GM12878 (cell line): ENCODE measurements at regions of chr7 and their contacts with region 1.

Region 1: DNA sequence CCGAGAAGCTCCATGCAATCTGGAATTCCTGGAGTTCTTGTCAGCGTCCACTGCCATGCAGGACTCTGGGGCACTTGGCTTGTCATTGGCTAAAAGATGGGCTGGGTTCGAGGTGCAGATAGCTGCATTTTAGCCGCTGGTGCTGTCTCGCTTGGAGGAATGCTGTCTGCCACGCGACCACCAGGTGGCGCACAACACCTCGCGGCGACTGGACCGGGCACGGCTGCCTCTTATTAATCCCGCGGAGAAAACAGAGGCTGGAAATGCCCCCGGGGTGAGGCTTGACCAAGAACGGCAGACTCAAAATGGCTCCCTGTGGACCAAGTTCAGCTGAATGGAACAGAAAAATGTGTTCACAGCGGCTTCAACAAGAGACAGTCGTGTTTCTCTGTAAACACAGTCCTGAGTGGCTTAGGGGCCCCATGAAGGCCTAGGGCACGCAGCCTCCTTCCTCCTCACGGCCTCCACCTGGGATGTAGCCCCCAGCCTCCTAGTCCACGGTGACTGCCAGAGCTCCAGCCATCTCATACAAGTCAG is 46.2 kb downstream of the AOC1 start:
- DNase-seq: no peak
- ATAC-seq: peak; percentile 97
- H3K4me3 ChIP-seq: no peak overlapping the region
- H3K27ac ChIP-seq: no peak overlapping the region
- H3K4me1 ChIP-seq: peaks cover 16% of the 10 kb centered on the region
- H3K27me3 ChIP-seq: peaks cover 0 to 6% of the 10 kb centered on the region in 2 experiments; a peak in 2 of 4 replicates
- CTCF ChIP-seq: peak; percentile 89 to 97 (median 93); a peak in 5 of 6 replicates
- EP300 ChIP-seq: no peak
- POLR2A ChIP-seq: no peak
- RAD21 ChIP-seq: peak; percentile 70

Region 2: GRCh38 chr7:150778738-150779301 is 119.7 kb before region 1 on chr7:
- CTCF ChIA-PET with region 1: interaction called, 16 read pairs
- POLR2A ChIA-PET with region 1: no interaction called
- RAD21 ChIA-PET with region 1: interaction called, 3 read pairs
- SMC1A ChIA-PET with region 1: interaction called, 12 read pairs
- in situ Hi-C with region 1: no loop called
- intact Hi-C with region 1: no loop called
- DNase-seq: no peak
- ATAC-seq: peak; percentile 86
- H3K4me3 ChIP-seq: no peak overlapping the region
- H3K27ac ChIP-seq: no peak overlapping the region
- H3K4me1 ChIP-seq: 0 out of 2 replicates have a peak, but pooled peaks cover 3% of the 10 kb centered on the region
- H3K27me3 ChIP-seq: no peaks in the 10 kb centered on the region
- CTCF ChIP-seq: peak; percentile 87 to 92 (median 88)
- EP300 ChIP-seq: no peak
- POLR2A ChIP-seq: no peak
- RAD21 ChIP-seq: peak; percentile 77

Region 3: DNA sequence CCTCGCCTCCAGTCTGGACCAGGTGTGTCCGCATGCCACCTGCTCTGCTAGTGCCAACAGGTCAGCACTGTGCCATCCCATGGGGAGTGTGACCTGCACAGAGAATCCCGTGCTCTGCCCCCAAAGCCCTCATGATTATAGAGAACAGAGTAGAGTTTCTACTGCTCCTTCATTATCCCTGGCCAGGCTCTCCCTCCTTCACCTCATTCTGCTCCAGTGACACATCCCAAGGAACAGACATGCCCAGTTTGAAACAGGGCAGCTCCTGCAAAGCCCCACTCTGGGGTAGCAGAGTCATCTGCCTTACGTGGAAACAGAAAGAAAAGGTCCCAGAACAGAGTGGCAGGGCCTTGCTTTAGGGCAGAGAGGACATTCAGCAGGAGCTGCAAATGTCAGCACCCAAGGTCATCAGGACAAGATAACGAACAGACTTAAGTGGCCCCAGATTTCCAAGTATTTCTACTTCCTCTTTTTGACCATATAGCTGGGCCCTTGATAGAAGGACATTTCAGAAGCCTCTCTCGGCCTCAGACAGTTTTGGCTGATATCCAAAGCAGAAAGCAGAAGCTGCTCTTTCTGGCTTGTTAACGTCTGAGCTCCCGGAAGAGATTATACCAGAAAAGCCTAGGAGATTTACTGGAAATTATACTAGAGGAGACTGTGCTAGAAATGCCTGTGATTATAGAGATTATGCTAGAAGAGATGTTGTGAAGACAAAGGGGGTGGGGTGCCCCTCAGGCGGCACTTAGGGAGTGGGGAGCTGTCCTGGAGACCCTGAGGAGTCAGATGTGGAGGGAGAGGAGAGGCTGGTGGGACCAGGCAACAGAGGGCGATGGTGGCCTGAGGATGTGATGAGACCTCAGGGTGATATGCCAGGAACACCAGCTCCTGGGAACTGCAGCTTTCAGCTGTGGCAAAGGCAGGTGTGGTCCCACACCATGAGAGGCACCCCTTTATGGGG is 110.9 kb before region 1 on chr7:
- CTCF ChIA-PET with region 1: interaction called, 16 read pairs
- POLR2A ChIA-PET with region 1: no interaction called
- RAD21 ChIA-PET with region 1: interaction called, 3 read pairs
- SMC1A ChIA-PET with region 1: interaction called, 3 read pairs
- in situ Hi-C with region 1: no loop called
- intact Hi-C with region 1: no loop called
- DNase-seq: peak; percentile 30
- ATAC-seq: peak; percentile 59
- H3K4me3 ChIP-seq: no peak overlapping the region
- H3K27ac ChIP-seq: no peak overlapping the region
- H3K4me1 ChIP-seq: peaks cover 17% of the 10 kb centered on the region
- H3K27me3 ChIP-seq: peaks cover 0 to 2% of the 10 kb centered on the region in 2 experiments; a peak in 1 of 4 replicates
- CTCF ChIP-seq: no peak
- EP300 ChIP-seq: no peak
- POLR2A ChIP-seq: no peak
- RAD21 ChIP-seq: no peak

Region 4: GRCh38 chr7:150876817-150877526 is 21.6 kb before region 1 on chr7:
- CTCF ChIA-PET with region 1: interaction called, 18 read pairs
- POLR2A ChIA-PET with region 1: no interaction called
- RAD21 ChIA-PET with region 1: no interaction called
- SMC1A ChIA-PET with region 1: interaction called, 5 read pairs
- in situ Hi-C with region 1: no loop called
- intact Hi-C with region 1: no loop called
- DNase-seq: no peak
- ATAC-seq: peak; percentile 73
- H3K4me3 ChIP-seq: no peak overlapping the region
- H3K27ac ChIP-seq: no peak overlapping the region
- H3K4me1 ChIP-seq: no peaks in the 10 kb centered on the region
- H3K27me3 ChIP-seq: no peaks in the 10 kb centered on the region
- CTCF ChIP-seq: peak; percentile 28 to 62 (median 48); a peak in 4 of 6 replicates
- EP300 ChIP-seq: no peak
- POLR2A ChIP-seq: no peak
- RAD21 ChIP-seq: no peak

Region 5: DNA sequence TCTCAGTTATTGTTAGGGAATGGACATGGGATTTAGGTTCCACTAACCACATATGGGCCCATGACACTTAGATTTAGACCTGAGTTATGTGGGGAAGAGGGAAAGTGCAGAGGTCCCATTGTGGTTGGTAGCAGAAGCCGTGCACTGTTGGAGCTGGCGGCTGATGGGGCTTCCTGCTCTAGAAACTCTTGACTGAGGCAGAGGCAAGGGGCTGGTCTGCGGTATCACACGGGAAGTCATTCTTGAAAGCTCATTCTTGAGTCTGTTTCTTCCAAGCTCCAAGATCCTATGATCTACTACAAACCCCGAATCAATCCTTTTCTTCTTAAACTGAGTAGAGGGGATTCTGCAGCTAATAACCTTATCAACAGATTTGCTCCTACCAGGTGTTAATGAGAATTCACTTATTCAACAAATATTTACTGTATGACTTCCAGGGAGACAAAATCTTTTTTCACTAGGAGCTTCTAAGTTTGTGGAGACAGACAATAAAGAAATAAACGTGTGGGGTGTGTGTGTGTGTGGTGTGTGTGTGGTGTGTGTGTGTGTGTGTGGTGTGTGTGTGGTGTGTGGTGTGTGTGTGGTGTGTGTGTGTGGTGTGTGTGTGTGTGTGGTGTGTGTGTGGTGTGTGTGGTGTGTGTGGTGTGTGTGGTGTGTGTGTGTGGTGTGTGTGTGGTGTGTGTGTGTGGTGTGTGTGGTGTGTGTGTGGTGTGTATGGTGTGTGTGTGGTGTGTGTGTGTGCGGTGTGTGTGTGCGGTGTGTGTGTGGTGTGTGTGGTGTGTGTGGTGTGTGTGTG is 10.9 kb after region 1 on chr7:
- CTCF ChIA-PET with region 1: interaction called, 18 read pairs
- POLR2A ChIA-PET with region 1: no interaction called
- RAD21 ChIA-PET with region 1: no interaction called
- SMC1A ChIA-PET with region 1: interaction called, 3 read pairs
- in situ Hi-C with region 1: no loop called
- intact Hi-C with region 1: no loop called
- DNase-seq: no peak
- ATAC-seq: no peak
- H3K4me3 ChIP-seq: no peak overlapping the region
- H3K27ac ChIP-seq: no peak overlapping the region
- H3K4me1 ChIP-seq: no peaks in the 10 kb centered on the region
- H3K27me3 ChIP-seq: peaks cover 0 to 2% of the 10 kb centered on the region in 2 experiments; a peak in 1 of 4 replicates
- CTCF ChIP-seq: no peak
- EP300 ChIP-seq: no peak
- POLR2A ChIP-seq: no peak
- RAD21 ChIP-seq: no peak

Region 6: DNA sequence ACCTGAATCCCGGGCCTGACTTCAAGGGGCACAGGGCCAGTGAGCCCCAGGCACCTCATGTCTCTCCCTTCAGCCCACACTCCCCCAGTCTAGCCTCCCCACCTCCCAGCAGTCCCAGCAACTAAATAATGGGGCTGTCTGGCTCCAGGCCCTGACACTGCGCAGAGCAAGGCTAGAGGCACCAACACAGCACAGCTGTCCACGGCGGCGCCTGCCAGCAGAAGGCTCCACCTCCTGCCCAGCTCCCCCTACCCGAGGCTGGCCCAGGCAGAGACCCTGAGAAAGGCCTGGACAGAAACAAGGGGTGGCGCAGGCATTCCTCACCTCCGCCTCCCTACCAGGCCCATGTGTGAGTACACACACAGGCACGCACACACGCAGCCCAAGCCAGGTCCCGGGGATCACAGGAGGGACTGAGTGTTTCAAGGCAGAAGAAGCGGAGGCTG is 73.5 kb after region 1 on chr7:
- CTCF ChIA-PET with region 1: no interaction called
- POLR2A ChIA-PET with region 1: no interaction called
- RAD21 ChIA-PET with region 1: no interaction called
- SMC1A ChIA-PET with region 1: no interaction called
- in situ Hi-C with region 1: no loop called
- intact Hi-C with region 1: no loop called
- DNase-seq: no peak
- ATAC-seq: no peak
- H3K4me3 ChIP-seq: no peak overlapping the region
- H3K27ac ChIP-seq: no peak overlapping the region
- H3K4me1 ChIP-seq: peaks cover 3% of the 10 kb centered on the region
- H3K27me3 ChIP-seq: peaks cover 3 to 4% of the 10 kb centered on the region in 2 experiments
- CTCF ChIP-seq: no peak
- EP300 ChIP-seq: no peak
- POLR2A ChIP-seq: no peak
- RAD21 ChIP-seq: no peak

Region 7: GRCh38 chr7:150988230-150989226 is 90.0 kb after region 1 on chr7:
- CTCF ChIA-PET with region 1: interaction called, 10 read pairs
- POLR2A ChIA-PET with region 1: no interaction called
- RAD21 ChIA-PET with region 1: interaction called, 3 read pairs
- SMC1A ChIA-PET with region 1: interaction called, 6 read pairs
- in situ Hi-C with region 1: loop called (anchors 5 kb)
- intact Hi-C with region 1: loop called (anchors 1 kb)
- DNase-seq: no peak
- ATAC-seq: peak; percentile 84
- H3K4me3 ChIP-seq: no peak overlapping the region
- H3K27ac ChIP-seq: no peak overlapping the region
- H3K4me1 ChIP-seq: no peaks in the 10 kb centered on the region; the same call in 1 of the 2 replicates
- H3K27me3 ChIP-seq: peaks cover 0 to 3% of the 10 kb centered on the region in 2 experiments; a peak in 2 of 4 replicates
- CTCF ChIP-seq: peak; percentile 65 to 79 (median 72)
- EP300 ChIP-seq: no peak
- POLR2A ChIP-seq: no peak
- RAD21 ChIP-seq: peak; percentile 73

Region 8: GRCh38 chr7:151038951-151039849 is 140.7 kb after region 1 on chr7:
- CTCF ChIA-PET with region 1: no interaction called
- POLR2A ChIA-PET with region 1: no interaction called
- RAD21 ChIA-PET with region 1: no interaction called
- SMC1A ChIA-PET with region 1: no interaction called
- in situ Hi-C with region 1: no loop called
- intact Hi-C with region 1: no loop called
- DNase-seq: no peak
- ATAC-seq: peak; percentile 78
- H3K4me3 ChIP-seq: no peak overlapping the region
- H3K27ac ChIP-seq: no peak overlapping the region
- H3K4me1 ChIP-seq: no peaks in the 10 kb centered on the region
- H3K27me3 ChIP-seq: no peaks in the 10 kb centered on the region
- CTCF ChIP-seq: no peak
- EP300 ChIP-seq: no peak
- POLR2A ChIP-seq: no peak
- RAD21 ChIP-seq: no peak